ENCODE measurements at regions of chr11 and their contacts with region 1.

Region 1: DNA sequence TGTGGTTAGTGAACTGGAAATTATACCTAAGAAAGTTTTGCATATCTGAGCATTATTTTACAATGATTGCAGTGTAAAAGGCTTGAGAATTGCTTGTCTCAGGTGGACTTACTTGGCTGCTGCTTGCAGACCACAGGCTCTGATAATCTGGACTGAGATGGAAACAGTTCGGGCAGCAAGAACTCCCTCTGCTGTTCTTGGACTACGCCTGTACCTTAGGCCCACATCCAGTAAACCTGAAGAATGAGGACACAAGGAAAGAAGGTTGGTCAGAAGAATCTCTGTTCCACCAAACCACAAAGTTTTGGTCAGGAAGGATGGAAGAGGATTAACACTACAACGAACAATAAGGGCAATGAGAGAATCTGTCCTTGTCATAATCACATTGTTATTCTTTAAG is 80.1 kb downstream of the C2CD3 start:
- DNase-seq: peak; percentile 62
- H3K4me3 ChIP-seq: no peak overlapping the region
- H3K4me3 Mint-ChIP-seq: no peak overlapping the region
- H3K27ac Mint-ChIP-seq: no peak overlapping the region
- H3K4me1 ChIP-seq: peaks cover 5% of the 10 kb centered on the region
- H3K4me1 Mint-ChIP-seq: peaks cover 4% of the 10 kb centered on the region
- H3K27me3 ChIP-seq: no peaks in the 10 kb centered on the region
- H3K27me3 Mint-ChIP-seq: no peaks in the 10 kb centered on the region
- CTCF ChIP-seq: peak; percentile 54 to 90

Region 2: GRCh38 chr11:73921180-73921579 is 169.5 kb before region 1 on chr11:
- CTCF ChIA-PET with region 1: no interaction called
- POLR2A ChIA-PET with region 1: no interaction called
- intact Hi-C with region 1: no loop called
- DNase-seq: no peak
- H3K4me3 ChIP-seq: no peak overlapping the region
- H3K4me3 Mint-ChIP-seq: no peak overlapping the region
- H3K27ac Mint-ChIP-seq: no peak overlapping the region
- H3K4me1 ChIP-seq: no peaks in the 10 kb centered on the region
- H3K4me1 Mint-ChIP-seq: no peaks in the 10 kb centered on the region
- H3K27me3 ChIP-seq: no peaks in the 10 kb centered on the region
- H3K27me3 Mint-ChIP-seq: no peaks in the 10 kb centered on the region
- CTCF ChIP-seq: no peak

Region 3: GRCh38 chr11:73961321-73961720 is 129.4 kb before region 1 on chr11:
- CTCF ChIA-PET with region 1: no interaction called
- POLR2A ChIA-PET with region 1: no interaction called
- intact Hi-C with region 1: loop called (anchors 1 kb)
- DNase-seq: peak in 1 of 2 experiments; percentile 32
- H3K4me3 ChIP-seq: no peak overlapping the region
- H3K4me3 Mint-ChIP-seq: no peak overlapping the region
- H3K27ac Mint-ChIP-seq: no peak overlapping the region
- H3K4me1 ChIP-seq: no peaks in the 10 kb centered on the region
- H3K4me1 Mint-ChIP-seq: peaks cover 1% of the 10 kb centered on the region
- H3K27me3 ChIP-seq: no peaks in the 10 kb centered on the region; the same call in 1 of the 2 replicates
- H3K27me3 Mint-ChIP-seq: no peaks in the 10 kb centered on the region
- CTCF ChIP-seq: no peak

Region 4: GRCh38 chr11:73989156-73989555 is 101.5 kb before region 1 on chr11:
- CTCF ChIA-PET with region 1: no interaction called
- POLR2A ChIA-PET with region 1: no interaction called
- intact Hi-C with region 1: loop called (anchors 1 kb)
- DNase-seq: peak; percentile 30 to 51
- H3K4me3 ChIP-seq: no peak overlapping the region
- H3K4me3 Mint-ChIP-seq: no peak overlapping the region
- H3K27ac Mint-ChIP-seq: no peak overlapping the region
- H3K4me1 ChIP-seq: peaks cover 8% of the 10 kb centered on the region
- H3K4me1 Mint-ChIP-seq: peaks cover under 1% of the 10 kb centered on the region
- H3K27me3 ChIP-seq: no peaks in the 10 kb centered on the region
- H3K27me3 Mint-ChIP-seq: no peaks in the 10 kb centered on the region
- CTCF ChIP-seq: peak; percentile 42 to 61

Region 5: DNA sequence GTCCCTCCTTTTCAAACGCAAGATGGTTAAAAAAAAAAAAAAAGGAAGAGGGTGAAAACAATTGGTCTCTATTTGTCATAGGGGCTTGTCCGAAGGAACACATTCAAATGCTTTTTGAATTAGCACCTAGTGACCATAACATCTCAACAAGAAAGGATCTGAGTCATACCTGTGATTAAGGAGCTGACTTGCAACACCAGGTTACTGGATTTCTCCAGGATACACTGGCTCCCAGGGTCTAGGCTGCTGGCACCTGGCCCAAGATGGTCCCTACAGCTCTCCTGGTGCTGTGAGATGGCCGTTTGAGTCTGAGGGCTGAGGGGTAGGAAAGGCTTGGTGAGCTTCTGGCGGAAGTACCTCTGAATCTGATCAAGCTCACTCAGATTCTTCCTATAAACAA is 53.4 kb before region 1 on chr11:
- CTCF ChIA-PET with region 1: no interaction called
- POLR2A ChIA-PET with region 1: no interaction called
- intact Hi-C with region 1: loop called (anchors 1 kb)
- DNase-seq: no peak
- H3K4me3 ChIP-seq: no peak overlapping the region
- H3K4me3 Mint-ChIP-seq: no peak overlapping the region
- H3K27ac Mint-ChIP-seq: no peak overlapping the region
- H3K4me1 ChIP-seq: no peaks in the 10 kb centered on the region
- H3K4me1 Mint-ChIP-seq: no peaks in the 10 kb centered on the region
- H3K27me3 ChIP-seq: no peaks in the 10 kb centered on the region
- H3K27me3 Mint-ChIP-seq: no peaks in the 10 kb centered on the region
- CTCF ChIP-seq: no peak

Region 6: GRCh38 chr11:74057249-74058151 is 33.2 kb before region 1 on chr11:
- CTCF ChIA-PET with region 1: no interaction called
- POLR2A ChIA-PET with region 1: no interaction called
- intact Hi-C with region 1: no loop called
- DNase-seq: no peak
- H3K4me3 ChIP-seq: no peak overlapping the region
- H3K4me3 Mint-ChIP-seq: no peak overlapping the region
- H3K27ac Mint-ChIP-seq: no peak overlapping the region
- H3K4me1 ChIP-seq: no peaks in the 10 kb centered on the region
- H3K4me1 Mint-ChIP-seq: no peaks in the 10 kb centered on the region
- H3K27me3 ChIP-seq: no peaks in the 10 kb centered on the region
- H3K27me3 Mint-ChIP-seq: no peaks in the 10 kb centered on the region
- CTCF ChIP-seq: no peak

Region 7: GRCh38 chr11:74226907-74227306 is 136.2 kb after region 1 on chr11:
- CTCF ChIA-PET with region 1: no interaction called
- POLR2A ChIA-PET with region 1: no interaction called
- intact Hi-C with region 1: loop called (anchors 1 kb)
- DNase-seq: peak in 1 of 2 experiments; percentile 48
- H3K4me3 ChIP-seq: no peak overlapping the region
- H3K4me3 Mint-ChIP-seq: no peak overlapping the region
- H3K27ac Mint-ChIP-seq: no peak overlapping the region
- H3K4me1 ChIP-seq: no peaks in the 10 kb centered on the region
- H3K4me1 Mint-ChIP-seq: peaks cover 9% of the 10 kb centered on the region
- H3K27me3 ChIP-seq: no peaks in the 10 kb centered on the region
- H3K27me3 Mint-ChIP-seq: no peaks in the 10 kb centered on the region
- CTCF ChIP-seq: peak in 1 of 2 experiments; percentile 27